GM10248 (cell line): ENCODE measurements at regions of chr9 and their contacts with region 1.

Region 1: GRCh38 chr9:132249123-132249522 is 87.3 kb downstream of the NTNG2 start:
- DNase-seq: no peak
- CTCF ChIP-seq: no peak

Region 2: GRCh38 chr9:131755541-131756198 is 493.5 kb before region 1 on chr9:
- CTCF ChIA-PET with region 1: interaction called, 149 read pairs
- POLR2A ChIA-PET with region 1: interaction called, 3 read pairs
- DNase-seq: peak; percentile 82
- CTCF ChIP-seq: peak; percentile 93

Region 3: GRCh38 chr9:132152231-132152630 is 96.9 kb before region 1 on chr9:
- CTCF ChIA-PET with region 1: no interaction called
- POLR2A ChIA-PET with region 1: no interaction called
- DNase-seq: no peak
- CTCF ChIP-seq: no peak

Region 4: GRCh38 chr9:132507746-132508469 is 258.8 kb after region 1 on chr9:
- CTCF ChIA-PET with region 1: no interaction called
- POLR2A ChIA-PET with region 1: no interaction called
- DNase-seq: peak; percentile 89
- CTCF ChIP-seq: peak; percentile 78